ENCODE measurements at regions of chr2 and their contacts with region 1.

Region 1: DNA sequence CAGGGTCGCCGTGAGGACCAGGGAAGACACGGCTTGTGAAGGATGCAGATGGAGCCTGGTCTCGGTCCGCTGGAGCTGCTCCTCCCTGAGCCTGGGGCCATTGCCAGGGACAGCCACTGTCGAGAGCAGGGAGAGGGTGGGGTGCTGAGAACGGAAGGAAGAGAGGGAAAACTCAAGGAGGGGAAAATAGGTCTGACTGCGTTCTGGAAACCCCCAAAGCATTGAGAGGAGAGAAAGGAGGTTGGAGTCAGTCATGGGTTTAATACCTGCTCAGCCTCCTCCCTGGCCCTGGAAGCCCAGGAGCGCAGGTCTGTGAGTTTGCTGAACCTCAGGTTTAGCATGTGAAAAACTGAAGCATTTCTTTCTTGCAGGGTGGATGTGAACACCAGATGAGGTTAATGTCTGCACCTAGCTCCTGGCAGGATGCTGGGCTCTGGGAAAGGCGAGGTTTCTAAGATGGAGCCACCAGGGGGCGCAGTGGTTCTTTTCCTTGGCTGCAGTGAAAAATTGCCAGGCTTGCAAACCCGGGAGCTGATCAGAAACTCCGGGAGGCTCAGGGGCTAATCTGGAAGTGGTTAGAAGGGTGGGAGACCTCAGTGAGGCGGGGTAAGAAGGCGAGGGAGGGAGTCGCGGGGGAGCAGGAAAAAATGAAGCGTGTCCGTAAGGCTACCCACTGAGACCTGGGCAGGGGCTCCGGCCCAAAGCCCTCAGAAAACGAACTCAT is 33.6 kb upstream of the RNF149 start:
- DNase-seq: peak; percentile 75
- ATAC-seq: peak; percentile 62
- H3K4me3 Mint-ChIP-seq: no peak overlapping the region
- H3K27ac Mint-ChIP-seq: peak overlapping the region; percentile 74
- H3K4me1 Mint-ChIP-seq: peaks cover 48% of the 10 kb centered on the region
- H3K27me3 Mint-ChIP-seq: peaks cover 4% of the 10 kb centered on the region

Region 2: GRCh38 chr2:101300164-101300563 is 41.9 kb before region 1 on chr2:
- CTCF ChIA-PET with region 1: interaction called, 12 read pairs
- POLR2A ChIA-PET with region 1: no interaction called
- DNase-seq: no peak
- ATAC-seq: no peak
- H3K4me3 Mint-ChIP-seq: no peak overlapping the region
- H3K27ac Mint-ChIP-seq: peak overlapping the region; percentile 2
- H3K4me1 Mint-ChIP-seq: peaks cover 71% of the 10 kb centered on the region
- H3K27me3 Mint-ChIP-seq: no peaks in the 10 kb centered on the region

Region 3: DNA sequence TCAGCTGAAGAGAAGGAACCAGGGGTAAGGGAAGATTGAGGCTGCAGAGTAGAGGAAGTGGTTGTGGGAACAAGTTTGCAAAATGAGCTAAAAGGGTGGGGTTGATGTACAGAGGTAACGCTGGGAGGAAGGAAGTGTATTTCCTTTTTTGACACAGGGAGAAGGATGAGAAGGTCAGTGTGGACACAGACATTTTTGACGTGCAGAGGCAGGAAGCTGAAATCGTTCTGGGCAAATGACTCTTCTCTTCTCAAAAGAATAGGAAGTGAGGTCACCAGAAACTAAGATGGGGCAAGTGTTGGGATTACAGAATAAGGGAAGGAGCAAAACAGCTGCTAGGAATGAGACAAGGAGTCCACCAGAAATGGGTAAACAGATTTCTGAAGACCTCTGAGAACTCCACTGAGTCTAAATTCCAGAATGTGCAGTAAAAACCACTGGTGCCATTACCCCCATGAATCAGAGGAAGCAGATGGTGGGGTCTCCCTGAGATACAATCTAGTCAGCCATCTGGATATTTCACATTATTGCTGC is 13.5 kb before region 1 on chr2:
- CTCF ChIA-PET with region 1: interaction called, 50 read pairs
- POLR2A ChIA-PET with region 1: interaction called, 4 read pairs
- DNase-seq: peak; percentile 75
- ATAC-seq: peak; percentile 87
- H3K4me3 Mint-ChIP-seq: no peak overlapping the region
- H3K27ac Mint-ChIP-seq: no peak overlapping the region
- H3K4me1 Mint-ChIP-seq: peaks cover 7% of the 10 kb centered on the region
- H3K27me3 Mint-ChIP-seq: no peaks in the 10 kb centered on the region

Region 4: DNA sequence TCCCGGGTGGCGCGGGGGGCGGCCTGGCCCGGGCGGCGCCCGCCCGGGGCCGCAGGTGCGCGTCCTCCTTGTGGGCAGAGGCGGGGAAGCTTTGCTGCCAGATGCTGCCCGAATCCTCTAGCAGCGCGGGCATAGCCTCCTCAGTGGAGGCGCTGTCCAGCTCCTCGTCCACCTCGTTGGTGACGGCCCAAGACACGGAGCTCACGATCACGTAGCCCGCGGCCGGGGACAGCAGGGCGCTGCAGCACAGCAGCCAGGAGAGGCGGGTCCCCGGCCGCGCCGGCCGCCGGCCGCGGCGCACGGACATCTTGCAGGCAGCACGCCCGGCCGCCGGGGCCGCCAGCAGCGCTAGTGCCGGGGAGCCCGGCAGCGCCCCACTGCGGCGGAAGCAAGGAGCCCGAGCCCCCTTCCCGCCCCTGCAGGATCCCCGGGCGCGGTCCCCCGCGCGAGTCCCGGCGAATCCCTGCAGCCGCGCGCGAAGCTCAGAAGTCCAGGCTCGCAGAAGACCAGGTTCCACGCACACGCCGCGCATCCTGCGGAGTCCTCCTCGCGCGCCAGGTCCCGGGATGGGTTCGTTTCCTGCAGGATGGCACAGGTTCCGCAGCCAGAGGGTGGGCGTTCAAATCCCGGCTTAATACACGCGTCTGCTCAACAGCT is 45.2 kb after region 1 on chr2 and contains the start of gene CREG2:
- CTCF ChIA-PET with region 1: interaction called, 47 read pairs
- POLR2A ChIA-PET with region 1: no interaction called
- DNase-seq: peak; percentile 62
- ATAC-seq: peak; percentile 89
- H3K4me3 Mint-ChIP-seq: peak within 1 kb of the TSS; percentile 52
- H3K27ac Mint-ChIP-seq: no peak within 1 kb of the TSS
- H3K4me1 Mint-ChIP-seq: peaks cover 11% of the 10 kb centered on the region
- H3K27me3 Mint-ChIP-seq: peaks cover 58% of the 10 kb centered on the region
- total RNA-seq, gene CREG2: not detected

Region 5: GRCh38 chr2:101831351-101831865 is 489.3 kb after region 1 on chr2:
- CTCF ChIA-PET with region 1: interaction called, 15 read pairs
- POLR2A ChIA-PET with region 1: no interaction called
- DNase-seq: peak; percentile 74
- ATAC-seq: peak; percentile 73
- H3K4me3 Mint-ChIP-seq: no peak overlapping the region
- H3K27ac Mint-ChIP-seq: peak overlapping the region; percentile 66
- H3K4me1 Mint-ChIP-seq: peaks cover 54% of the 10 kb centered on the region
- H3K27me3 Mint-ChIP-seq: no peaks in the 10 kb centered on the region

Measured in activated CD8-positive, alpha-beta T cell treated with anti-CD3 and anti-CD28 coated beads, Interleukin-2, amount 10 ng/mL, durations not matched to agents 7 days and 5 days (primary cell).